ENCODE measurements at regions of chr14 and their contacts with region 1.

Region 1: GRCh38 chr14:99271951-99272631 is at the start of gene BCL11B:
- DNase-seq: peak; percentile 63 to 94 (median 91)
- ATAC-seq: peak; percentile 89
- H3K4me3 ChIP-seq: peak within 1 kb of the TSS; percentile 94
- H3K4me3 Mint-ChIP-seq: peak within 1 kb of the TSS; percentile 92 to 100 (median 98)
- H3K27ac ChIP-seq: peak within 1 kb of the TSS; percentile 98
- H3K27ac Mint-ChIP-seq: peak within 1 kb of the TSS; percentile 91 to 99 (median 98)
- H3K4me1 ChIP-seq: peaks cover 6 to 12% of the 10 kb centered on the region in 2 donors
- H3K4me1 Mint-ChIP-seq: peaks cover 25 to 46% (median 34%) of the 10 kb centered on the region in 7 donors
- H3K27me3 ChIP-seq: no peaks in the 10 kb centered on the region
- H3K27me3 Mint-ChIP-seq: peaks cover 0 to 26% (median 0%) of the 10 kb centered on the region in 5 donors
- total RNA-seq, gene BCL11B: 96.3 to 269 (median 223) TPM

Region 2: GRCh38 chr14:97350894-97351731 is 1921.0 kb before region 1 on chr14:
- CTCF ChIA-PET with region 1: no interaction called
- POLR2A ChIA-PET with region 1: no interaction called
- intact Hi-C with region 1: loop called in 1 of 2 experiments (anchors 1 kb)
- DNase-seq: peak in 4 of 9 donors; percentile 5 to 19 (median 10)
- ATAC-seq: no peak
- H3K4me3 ChIP-seq: no peak overlapping the region
- H3K4me3 Mint-ChIP-seq: no peak overlapping the region
- H3K27ac ChIP-seq: no peak overlapping the region
- H3K27ac Mint-ChIP-seq: peak overlapping the region in 1 of 9 donors; percentile 24
- H3K4me1 ChIP-seq: no peaks in the 10 kb centered on the region
- H3K4me1 Mint-ChIP-seq: peaks cover 0 to 19% (median 8%) of the 10 kb centered on the region in 7 donors
- H3K27me3 ChIP-seq: no peaks in the 10 kb centered on the region
- H3K27me3 Mint-ChIP-seq: peaks cover 0 to 5% (median 0%) of the 10 kb centered on the region in 5 donors

Region 3: DNA sequence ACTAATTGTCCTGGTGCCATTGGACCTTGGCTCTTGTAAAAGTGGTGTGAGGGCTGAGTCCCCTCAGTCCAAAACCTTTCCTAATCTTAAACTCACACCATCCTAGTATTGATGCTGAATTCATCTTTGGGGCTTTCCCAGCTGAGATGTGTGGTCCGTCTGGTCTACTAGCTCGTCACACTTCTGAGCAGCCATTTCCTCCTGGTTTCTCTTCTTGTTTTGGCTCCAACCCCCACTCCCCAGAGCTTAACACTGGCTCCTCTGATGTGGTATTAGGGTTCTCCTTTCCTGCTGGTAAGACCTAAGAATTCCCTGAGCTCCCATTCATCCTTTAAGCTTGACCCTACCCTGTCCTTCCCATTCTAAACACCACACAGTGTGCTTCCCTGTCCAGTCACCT is 1574.3 kb before region 1 on chr14:
- CTCF ChIA-PET with region 1: interaction called, 3 read pairs
- POLR2A ChIA-PET with region 1: no interaction called
- intact Hi-C with region 1: loop called in 1 of 2 experiments (anchors 5 kb)
- DNase-seq: peak in 1 of 9 donors; percentile 34
- ATAC-seq: peak; percentile 78
- H3K4me3 ChIP-seq: no peak overlapping the region
- H3K4me3 Mint-ChIP-seq: peak overlapping the region in 6 of 10 donors; percentile 30 to 73 (median 49)
- H3K27ac ChIP-seq: no peak overlapping the region
- H3K27ac Mint-ChIP-seq: peak overlapping the region; percentile 12 to 88 (median 53)
- H3K4me1 ChIP-seq: peaks cover 21 to 37% of the 10 kb centered on the region in 2 donors
- H3K4me1 Mint-ChIP-seq: peaks cover 14 to 55% (median 44%) of the 10 kb centered on the region in 7 donors
- H3K27me3 ChIP-seq: no peaks in the 10 kb centered on the region
- H3K27me3 Mint-ChIP-seq: peaks cover 0 to 4% (median 0%) of the 10 kb centered on the region in 5 donors

Region 4: GRCh38 chr14:97878727-97879126 is 1393.4 kb before region 1 on chr14:
- CTCF ChIA-PET with region 1: no interaction called
- POLR2A ChIA-PET with region 1: no interaction called
- intact Hi-C with region 1: loop called in 1 of 2 experiments (anchors 10 kb)
- DNase-seq: peak in 7 of 9 donors; percentile 31 to 77 (median 70)
- ATAC-seq: peak; percentile 78
- H3K4me3 ChIP-seq: no peak overlapping the region
- H3K4me3 Mint-ChIP-seq: peak overlapping the region in 9 of 10 donors; percentile 2 to 70 (median 41)
- H3K27ac ChIP-seq: peak overlapping the region; percentile 51
- H3K27ac Mint-ChIP-seq: peak overlapping the region; percentile 81 to 99 (median 90)
- H3K4me1 ChIP-seq: peaks cover 3 to 36% of the 10 kb centered on the region in 2 donors
- H3K4me1 Mint-ChIP-seq: peaks cover 12 to 75% (median 66%) of the 10 kb centered on the region in 7 donors
- H3K27me3 ChIP-seq: no peaks in the 10 kb centered on the region
- H3K27me3 Mint-ChIP-seq: peaks cover 0 to 3% (median 0%) of the 10 kb centered on the region in 5 donors

Region 5: GRCh38 chr14:98189062-98189461 is 1083.0 kb before region 1 on chr14:
- CTCF ChIA-PET with region 1: interaction called, 3 read pairs
- POLR2A ChIA-PET with region 1: interaction called, 323 read pairs
- intact Hi-C with region 1: loop called (anchors 1 kb)
- DNase-seq: peak in 1 of 9 donors; percentile 50
- ATAC-seq: peak; percentile 40
- H3K4me3 ChIP-seq: peak overlapping the region; percentile 48
- H3K4me3 Mint-ChIP-seq: peak overlapping the region; percentile 63 to 86 (median 76)
- H3K27ac ChIP-seq: peak overlapping the region; percentile 80
- H3K27ac Mint-ChIP-seq: peak overlapping the region; percentile 92 to 100 (median 98)
- H3K4me1 ChIP-seq: peaks cover 82 to 95% of the 10 kb centered on the region in 2 donors
- H3K4me1 Mint-ChIP-seq: peaks cover 56 to 100% (median 98%) of the 10 kb centered on the region in 7 donors
- H3K27me3 ChIP-seq: no peaks in the 10 kb centered on the region
- H3K27me3 Mint-ChIP-seq: no peaks in the 10 kb centered on the region

Region 6: GRCh38 chr14:98931911-98932310 is 340.2 kb before region 1 on chr14:
- CTCF ChIA-PET with region 1: no interaction called
- POLR2A ChIA-PET with region 1: interaction called, 3 read pairs
- intact Hi-C with region 1: loop called (anchors 2 to 10 kb)
- DNase-seq: peak; percentile 31 to 90 (median 88)
- ATAC-seq: peak; percentile 97
- H3K4me3 ChIP-seq: peak overlapping the region; percentile 40
- H3K4me3 Mint-ChIP-seq: peak overlapping the region; percentile 66 to 92 (median 80)
- H3K27ac ChIP-seq: peak overlapping the region; percentile 66
- H3K27ac Mint-ChIP-seq: peak overlapping the region; percentile 82 to 98 (median 94)
- H3K4me1 ChIP-seq: peaks cover 31 to 76% of the 10 kb centered on the region in 2 donors
- H3K4me1 Mint-ChIP-seq: peaks cover 51 to 100% (median 99%) of the 10 kb centered on the region in 7 donors
- H3K27me3 ChIP-seq: no peaks in the 10 kb centered on the region
- H3K27me3 Mint-ChIP-seq: peaks cover 0 to 2% (median 0%) of the 10 kb centered on the region in 5 donors

Region 7: GRCh38 chr14:99415496-99416281 is 143.6 kb after region 1 on chr14:
- CTCF ChIA-PET with region 1: no interaction called
- POLR2A ChIA-PET with region 1: no interaction called
- intact Hi-C with region 1: loop called in 1 of 2 experiments (anchors 2 kb)
- DNase-seq: peak in 8 of 9 donors; percentile 49 to 81 (median 75)
- ATAC-seq: peak; percentile 98
- H3K4me3 ChIP-seq: no peak overlapping the region
- H3K4me3 Mint-ChIP-seq: no peak overlapping the region
- H3K27ac ChIP-seq: no peak overlapping the region
- H3K27ac Mint-ChIP-seq: peak overlapping the region in 3 of 9 donors; percentile 56 to 73 (median 73)
- H3K4me1 ChIP-seq: peaks cover 0 to 4% of the 10 kb centered on the region in 2 donors
- H3K4me1 Mint-ChIP-seq: peaks cover 2 to 19% (median 6%) of the 10 kb centered on the region in 7 donors
- H3K27me3 ChIP-seq: no peaks in the 10 kb centered on the region
- H3K27me3 Mint-ChIP-seq: no peaks in the 10 kb centered on the region